Panc1 (cell line): ENCODE measurements at regions of chr6 and their contacts with region 1.

Region 1: DNA sequence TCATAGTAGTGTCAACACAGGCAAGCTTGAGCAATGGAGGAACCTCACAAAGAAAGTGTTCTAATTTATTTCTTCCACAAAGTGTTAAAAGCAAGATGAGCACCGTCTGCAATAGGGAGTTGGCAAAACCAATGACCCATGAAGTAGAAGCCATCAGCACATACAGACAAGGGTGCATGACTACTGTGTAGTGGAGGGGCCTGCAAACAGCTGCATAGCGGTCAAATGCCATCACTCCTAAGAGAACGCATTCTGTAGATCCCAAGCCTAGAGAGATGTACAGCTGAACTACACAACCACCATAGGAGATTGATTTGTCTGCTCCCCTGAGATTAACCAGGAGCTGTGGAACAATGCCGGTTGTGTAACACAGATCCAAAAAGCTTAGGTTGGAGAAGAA is 26.8 kb upstream of the ZNF165 start:
- DNase-seq: no peak
- ATAC-seq: no peak
- H3K4me3 ChIP-seq: no peak overlapping the region
- H3K27ac ChIP-seq: no peak overlapping the region
- H3K4me1 ChIP-seq: no peaks in the 10 kb centered on the region
- H3K27me3 ChIP-seq: no peaks in the 10 kb centered on the region; the same call in 1 of the 2 replicates
- CTCF ChIP-seq: no peak

Region 2: GRCh38 chr6:27922949-27923348 is 130.6 kb before region 1 on chr6:
- CTCF ChIA-PET with region 1: no interaction called
- POLR2A ChIA-PET with region 1: no interaction called
- in situ Hi-C with region 1: no loop called
- intact Hi-C with region 1: no loop called
- DNase-seq: no peak
- ATAC-seq: no peak
- H3K4me3 ChIP-seq: no peak overlapping the region
- H3K27ac ChIP-seq: no peak overlapping the region
- H3K4me1 ChIP-seq: no peaks in the 10 kb centered on the region
- H3K27me3 ChIP-seq: no peaks in the 10 kb centered on the region
- CTCF ChIP-seq: no peak

Region 3: DNA sequence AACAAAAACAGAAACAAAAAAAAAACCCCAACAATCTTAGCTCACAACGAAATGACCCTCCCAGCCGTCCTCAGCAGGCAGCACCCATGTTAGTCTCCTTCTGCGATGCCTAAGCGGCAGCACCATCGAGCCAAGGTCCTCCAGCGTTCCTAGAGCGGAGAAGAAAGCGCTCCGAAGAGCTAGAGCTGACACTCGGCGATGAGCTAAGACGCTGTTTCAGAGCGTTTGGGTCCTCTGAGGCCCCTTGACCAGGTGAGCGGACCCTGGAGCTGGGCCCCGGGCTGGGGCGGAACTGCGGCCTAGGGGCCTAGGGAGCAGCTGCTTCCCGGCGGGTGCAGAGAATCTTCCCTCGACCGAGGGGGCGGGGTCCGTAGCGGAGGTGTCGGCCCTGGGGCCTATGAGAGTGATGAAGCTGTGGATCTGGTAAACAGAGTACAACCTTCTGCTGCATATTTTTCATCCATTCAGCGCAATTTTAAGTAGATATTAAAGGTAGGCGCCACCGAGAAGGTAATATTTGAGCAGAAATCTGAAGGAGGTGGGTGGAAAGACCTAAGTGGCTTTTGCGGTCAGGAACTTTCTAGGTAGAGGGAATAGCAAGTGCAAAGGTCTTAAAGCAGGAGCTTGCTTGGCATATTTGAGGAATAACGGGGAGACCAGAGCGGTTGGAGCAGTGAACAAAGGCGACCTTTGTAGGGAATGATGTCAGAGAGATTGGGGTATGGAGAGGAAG is 213.5 kb after region 1 on chr6 and contains the start of gene ZSCAN26:
- CTCF ChIA-PET with region 1: no interaction called
- POLR2A ChIA-PET with region 1: interaction called, 10 read pairs
- in situ Hi-C with region 1: no loop called
- intact Hi-C with region 1: no loop called
- DNase-seq: peak; percentile 78
- ATAC-seq: peak; percentile 98
- H3K4me3 ChIP-seq: peak within 1 kb of the TSS; percentile 73 to 83
- H3K27ac ChIP-seq: peak within 1 kb of the TSS; percentile 95
- H3K4me1 ChIP-seq: peaks cover 16% of the 10 kb centered on the region; the same call in 1 of the 2 replicates
- H3K27me3 ChIP-seq: no peaks in the 10 kb centered on the region
- CTCF ChIP-seq: no peak
- total RNA-seq, gene ZSCAN26: 6.6 TPM